Endothelial cell of umbilical vein (primary cell): ENCODE measurements at regions of chr3 and their contacts with region 1.

Region 1: DNA sequence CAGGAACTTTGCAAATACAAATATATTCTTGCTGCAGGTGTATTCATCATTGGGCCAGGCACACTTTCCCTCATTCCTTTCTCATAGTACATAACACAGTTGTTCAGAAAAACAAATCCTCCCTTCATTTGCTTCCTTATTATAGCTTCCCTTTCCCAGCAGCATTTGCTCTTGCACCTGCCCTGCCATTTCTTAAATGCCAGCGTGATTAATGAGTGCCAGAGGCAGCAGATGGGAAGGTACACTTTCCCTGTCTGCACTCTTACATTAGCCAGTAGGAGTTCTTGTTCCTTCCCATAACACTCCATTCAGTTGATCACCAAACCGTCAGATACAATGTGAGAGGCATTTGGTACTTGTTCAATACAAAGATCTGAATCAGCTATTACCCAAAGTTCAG is 128.5 kb upstream of the GAP43 start:
- DNase-seq: no peak
- H3K4me3 ChIP-seq: no peak overlapping the region
- H3K27ac ChIP-seq: no peak overlapping the region
- H3K4me1 ChIP-seq: no peaks in the 10 kb centered on the region
- H3K27me3 ChIP-seq: peaks cover 2 to 6% of the 10 kb centered on the region in 2 experiments
- CTCF ChIP-seq: no peak
- POLR2A ChIP-seq: no peak

Region 2: GRCh38 chr3:115550285-115550761 is 55.5 kb after region 1 on chr3:
- CTCF ChIA-PET with region 1: no interaction called
- POLR2A ChIA-PET with region 1: no interaction called
- dilution Hi-C with region 1: no loop called
- intact Hi-C with region 1: loop called (anchors 10 kb)
- DNase-seq: no peak
- H3K4me3 ChIP-seq: no peak overlapping the region
- H3K27ac ChIP-seq: no peak overlapping the region
- H3K4me1 ChIP-seq: no peaks in the 10 kb centered on the region
- H3K27me3 ChIP-seq: peaks cover 0 to 2% of the 10 kb centered on the region in 2 experiments
- CTCF ChIP-seq: no peak
- POLR2A ChIP-seq: no peak